Calu3 (cell line): ENCODE measurements at regions of chr1 and their contacts with region 1.

Region 1: DNA sequence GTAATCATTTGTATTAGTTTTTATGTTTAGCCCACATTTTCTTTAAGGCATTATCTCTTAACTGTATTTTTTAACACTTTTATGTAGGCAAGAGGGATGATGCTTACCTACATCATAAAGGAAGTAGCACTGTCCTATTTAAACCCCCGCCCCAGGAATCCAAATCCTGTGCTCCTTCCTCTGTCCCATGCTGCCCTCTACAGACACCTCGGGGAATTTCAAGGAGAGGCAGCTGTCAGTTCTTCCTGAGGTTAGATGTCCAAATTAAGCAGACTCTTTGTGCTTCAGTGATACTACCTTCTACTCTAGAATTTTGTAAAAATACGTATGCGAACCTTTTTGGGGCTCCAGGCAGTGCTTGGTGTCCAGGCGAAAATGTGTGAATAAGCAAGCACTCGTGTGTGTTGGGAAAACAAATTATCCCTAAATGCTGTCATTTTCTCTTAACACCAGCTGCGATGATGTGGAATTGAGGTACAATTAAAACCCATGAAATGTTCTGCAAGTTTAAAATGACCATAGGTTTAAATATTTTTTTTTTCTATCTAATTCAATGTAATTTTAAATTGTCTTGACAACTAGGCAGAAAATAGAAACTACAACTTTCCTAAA is 19.2 kb downstream of the CRCT1 start:
- DNase-seq: peak; percentile 80
- H3K4me3 Mint-ChIP-seq: no peak overlapping the region
- H3K27ac Mint-ChIP-seq: no peak overlapping the region
- H3K4me1 Mint-ChIP-seq: no peaks in the 10 kb centered on the region
- H3K27me3 Mint-ChIP-seq: peaks cover 64% of the 10 kb centered on the region
- CTCF ChIP-seq: peak; percentile 76

Region 2: GRCh38 chr1:152442706-152443158 is 90.7 kb before region 1 on chr1:
- CTCF ChIA-PET with region 1: no interaction called
- intact Hi-C with region 1: no loop called
- DNase-seq: no peak
- H3K4me3 Mint-ChIP-seq: no peak overlapping the region
- H3K27ac Mint-ChIP-seq: no peak overlapping the region
- H3K4me1 Mint-ChIP-seq: no peaks in the 10 kb centered on the region
- H3K27me3 Mint-ChIP-seq: peaks cover 72% of the 10 kb centered on the region
- CTCF ChIP-seq: no peak

Region 3: DNA sequence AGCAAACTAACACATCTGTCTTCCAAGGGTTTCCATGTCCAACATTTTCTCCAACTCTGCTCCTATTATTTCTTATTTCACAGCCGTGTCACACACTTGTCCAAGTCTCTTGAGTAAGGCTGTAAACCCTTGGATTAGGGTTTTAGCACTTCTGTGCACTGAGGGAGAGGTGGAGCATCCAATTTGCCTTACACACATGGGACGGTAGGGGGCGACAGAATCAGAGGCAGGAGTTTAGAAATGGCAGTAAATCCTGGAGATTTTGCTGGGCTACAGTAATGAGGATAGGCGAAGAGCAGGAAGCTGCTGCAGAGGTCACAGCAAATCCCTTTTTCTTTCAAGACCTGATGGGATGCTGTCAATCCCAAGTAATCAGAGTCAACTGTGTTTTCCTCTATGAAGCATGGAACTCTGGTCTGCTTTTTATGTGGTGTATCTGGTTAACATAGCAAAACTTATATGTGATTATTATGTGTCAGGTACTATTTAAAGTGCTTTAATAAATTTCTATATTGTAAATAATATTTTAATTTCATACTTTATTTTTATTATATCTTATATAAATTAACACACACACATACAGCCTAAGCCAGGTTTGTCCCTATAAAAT is 38.3 kb before region 1 on chr1:
- CTCF ChIA-PET with region 1: interaction called, 4 read pairs
- intact Hi-C with region 1: loop called (anchors 1 kb)
- DNase-seq: peak; percentile 74
- H3K4me3 Mint-ChIP-seq: no peak overlapping the region
- H3K27ac Mint-ChIP-seq: no peak overlapping the region
- H3K4me1 Mint-ChIP-seq: no peaks in the 10 kb centered on the region
- H3K27me3 Mint-ChIP-seq: peaks cover 12% of the 10 kb centered on the region
- CTCF ChIP-seq: peak; percentile 64

Region 4: DNA sequence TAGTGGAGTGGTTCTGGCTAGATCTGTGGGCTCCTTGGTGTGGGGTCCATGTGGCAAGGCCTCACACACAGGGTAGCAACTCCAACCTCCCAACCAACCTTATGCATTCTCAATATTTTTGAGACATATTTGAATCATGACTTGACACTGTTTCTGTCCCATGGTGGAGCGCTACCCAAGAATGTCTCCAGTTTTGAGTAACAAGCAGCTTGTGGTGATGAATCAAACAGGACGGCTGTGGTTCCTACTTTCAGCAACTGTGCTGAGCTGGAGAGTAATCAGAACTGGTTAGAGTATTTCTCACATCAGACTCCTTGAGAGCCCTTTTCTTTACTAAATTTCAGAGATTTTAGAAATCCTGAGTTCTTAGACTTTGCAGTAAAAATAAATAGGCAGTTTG is 43.7 kb after region 1 on chr1:
- CTCF ChIA-PET with region 1: no interaction called
- intact Hi-C with region 1: no loop called
- DNase-seq: no peak
- H3K4me3 Mint-ChIP-seq: no peak overlapping the region
- H3K27ac Mint-ChIP-seq: no peak overlapping the region
- H3K4me1 Mint-ChIP-seq: no peaks in the 10 kb centered on the region
- H3K27me3 Mint-ChIP-seq: peaks cover 59% of the 10 kb centered on the region
- CTCF ChIP-seq: no peak